ENCODE measurements at regions of chr15 and their contacts with region 1.

Region 1: GRCh38 chr15:73305331-73306211 is 63.2 kb downstream of the HCN4 start:
- DNase-seq: peak in 4 of 5 donors; percentile 39 to 53 (median 48)
- ATAC-seq: peak; percentile 72 to 93 (median 86)
- H3K4me3 ChIP-seq: no peak overlapping the region
- H3K27ac ChIP-seq: no peak overlapping the region
- H3K4me1 ChIP-seq: peaks cover 0 to 20% (median 0%) of the 10 kb centered on the region in 12 donors
- H3K27me3 ChIP-seq: no peaks in the 10 kb centered on the region
- CTCF ChIP-seq: peak; percentile 24 to 64 (median 58)
- POLR2A ChIP-seq: no peak

Region 2: GRCh38 chr15:73388256-73388781 is 82.7 kb after region 1 on chr15:
- intact Hi-C with region 1: loop called in 1 of 10 experiments (anchors 5 kb)
- DNase-seq: no peak
- ATAC-seq: peak; percentile 29 to 65 (median 43)
- H3K4me3 ChIP-seq: no peak overlapping the region
- H3K27ac ChIP-seq: peak overlapping the region in 3 of 12 donors; percentile 34 to 50 (median 34)
- H3K4me1 ChIP-seq: peaks cover 0 to 34% (median 2%) of the 10 kb centered on the region in 12 donors
- H3K27me3 ChIP-seq: peaks cover 0 to 27% (median 0%) of the 10 kb centered on the region in 9 donors
- CTCF ChIP-seq: no peak
- POLR2A ChIP-seq: no peak

Region 3: GRCh38 chr15:73539212-73540125 is 233.9 kb after region 1 on chr15:
- intact Hi-C with region 1: loop called in 5 of 10 experiments (anchors 5 to 10 kb)
- DNase-seq: peak in 1 of 5 donors; percentile 31
- ATAC-seq: no peak
- H3K4me3 ChIP-seq: no peak overlapping the region
- H3K27ac ChIP-seq: no peak overlapping the region
- H3K4me1 ChIP-seq: no peaks in the 10 kb centered on the region
- H3K27me3 ChIP-seq: no peaks in the 10 kb centered on the region
- CTCF ChIP-seq: peak in 1 of 12 donors; percentile 18
- POLR2A ChIP-seq: no peak

Region 4: GRCh38 chr15:73550190-73550589 is 244.6 kb after region 1 on chr15:
- intact Hi-C with region 1: loop called in 4 of 10 experiments (anchors 5 to 10 kb)
- DNase-seq: no peak
- ATAC-seq: no peak
- H3K4me3 ChIP-seq: no peak overlapping the region
- H3K27ac ChIP-seq: no peak overlapping the region
- H3K4me1 ChIP-seq: peaks cover 0 to 8% (median 0%) of the 10 kb centered on the region in 12 donors
- H3K27me3 ChIP-seq: no peaks in the 10 kb centered on the region
- CTCF ChIP-seq: no peak
- POLR2A ChIP-seq: no peak

Region 5: DNA sequence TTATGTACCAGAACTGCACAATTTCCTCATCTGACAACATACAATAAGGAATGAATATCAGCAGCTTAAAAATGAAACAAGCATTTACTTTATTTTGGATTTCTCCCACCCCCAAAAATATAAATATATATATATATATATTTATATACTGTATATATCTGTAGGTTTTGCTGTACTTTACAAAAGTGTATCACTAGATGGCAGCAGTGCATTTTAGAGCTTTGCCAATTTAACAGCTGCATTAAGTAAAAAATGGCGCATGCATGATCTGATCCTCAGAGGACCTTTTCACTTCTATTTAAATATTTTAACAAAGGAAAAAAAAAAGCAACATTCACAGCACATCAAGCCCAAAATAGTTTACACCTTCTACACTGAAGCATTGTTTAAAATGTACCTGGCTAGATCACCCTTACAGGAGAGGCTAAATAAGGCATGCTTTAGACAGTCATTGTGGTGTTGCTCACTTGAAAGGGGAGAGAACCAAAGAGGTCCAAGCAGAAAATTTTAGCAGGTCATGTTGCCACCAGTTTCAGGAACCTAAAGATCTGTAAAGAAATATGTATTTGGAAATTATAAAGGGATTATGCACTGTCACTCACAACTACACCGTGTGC is 255.0 kb after region 1 on chr15:
- intact Hi-C with region 1: loop called in 2 of 10 experiments (anchors 10 kb)
- DNase-seq: no peak
- ATAC-seq: peak in 1 of 4 donors; percentile 49
- H3K4me3 ChIP-seq: no peak overlapping the region
- H3K27ac ChIP-seq: peak overlapping the region in 1 of 12 donors; percentile 2
- H3K4me1 ChIP-seq: peaks cover 0 to 15% (median 3%) of the 10 kb centered on the region in 12 donors
- H3K27me3 ChIP-seq: no peaks in the 10 kb centered on the region
- CTCF ChIP-seq: peak; percentile 16 to 70 (median 54)
- POLR2A ChIP-seq: no peak

Region 6: DNA sequence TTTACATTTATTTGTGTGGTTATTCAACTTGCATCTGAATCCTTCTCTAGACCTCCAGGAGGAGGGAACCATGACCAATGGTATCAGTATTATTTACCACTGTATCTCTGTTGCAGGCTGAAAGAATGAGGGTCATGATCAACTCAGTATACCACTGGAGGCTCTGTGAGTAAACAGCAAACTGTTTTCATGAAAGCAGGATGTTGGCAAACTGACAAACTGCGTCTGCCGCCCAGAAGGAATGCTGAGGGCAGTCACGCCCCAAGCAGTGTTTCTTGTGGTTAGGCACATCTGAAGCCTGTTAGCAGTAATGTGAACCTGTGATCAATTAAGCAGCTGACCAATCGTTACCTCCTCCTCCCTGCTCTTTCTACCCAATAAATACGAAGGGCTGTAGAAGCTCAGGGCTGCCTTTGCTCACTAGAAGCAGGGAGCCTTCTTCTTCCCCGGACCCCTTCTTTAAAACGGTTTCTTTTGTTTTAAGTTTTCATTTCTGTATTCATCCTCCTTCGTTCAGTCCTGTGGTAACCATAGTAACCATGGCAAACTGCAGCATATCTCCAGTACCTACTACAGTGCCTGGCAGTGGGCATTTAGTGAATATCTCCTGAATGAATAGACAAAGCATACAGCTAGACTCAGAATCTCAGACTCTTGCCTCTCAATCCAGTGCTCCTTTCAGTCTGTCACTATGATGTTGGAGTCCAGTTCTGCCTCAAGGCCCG is 334.1 kb after region 1 on chr15:
- intact Hi-C with region 1: loop called in 9 of 10 experiments (anchors 1 to 10 kb)
- DNase-seq: no peak
- ATAC-seq: no peak
- H3K4me3 ChIP-seq: no peak overlapping the region
- H3K27ac ChIP-seq: no peak overlapping the region
- H3K4me1 ChIP-seq: peaks cover 0 to 10% (median 0%) of the 10 kb centered on the region in 12 donors
- H3K27me3 ChIP-seq: peaks cover 0 to 2% (median 0%) of the 10 kb centered on the region in 9 donors
- CTCF ChIP-seq: no peak
- POLR2A ChIP-seq: no peak

Region 7: GRCh38 chr15:73697033-73697467 is 391.5 kb after region 1 on chr15:
- intact Hi-C with region 1: loop called in 6 of 10 experiments (anchors 5 to 10 kb)
- DNase-seq: peak; percentile 90 to 94 (median 92)
- ATAC-seq: peak; percentile 89 to 97 (median 92)
- H3K4me3 ChIP-seq: no peak overlapping the region
- H3K27ac ChIP-seq: peak overlapping the region in 6 of 12 donors; percentile 5 to 47 (median 25)
- H3K4me1 ChIP-seq: peaks cover 0 to 56% (median 46%) of the 10 kb centered on the region in 12 donors
- H3K27me3 ChIP-seq: peaks cover 0 to 6% (median 0%) of the 10 kb centered on the region in 9 donors
- CTCF ChIP-seq: no peak
- POLR2A ChIP-seq: no peak